ENCODE measurements at regions of chr13 and their contacts with region 1.

Region 1: DNA sequence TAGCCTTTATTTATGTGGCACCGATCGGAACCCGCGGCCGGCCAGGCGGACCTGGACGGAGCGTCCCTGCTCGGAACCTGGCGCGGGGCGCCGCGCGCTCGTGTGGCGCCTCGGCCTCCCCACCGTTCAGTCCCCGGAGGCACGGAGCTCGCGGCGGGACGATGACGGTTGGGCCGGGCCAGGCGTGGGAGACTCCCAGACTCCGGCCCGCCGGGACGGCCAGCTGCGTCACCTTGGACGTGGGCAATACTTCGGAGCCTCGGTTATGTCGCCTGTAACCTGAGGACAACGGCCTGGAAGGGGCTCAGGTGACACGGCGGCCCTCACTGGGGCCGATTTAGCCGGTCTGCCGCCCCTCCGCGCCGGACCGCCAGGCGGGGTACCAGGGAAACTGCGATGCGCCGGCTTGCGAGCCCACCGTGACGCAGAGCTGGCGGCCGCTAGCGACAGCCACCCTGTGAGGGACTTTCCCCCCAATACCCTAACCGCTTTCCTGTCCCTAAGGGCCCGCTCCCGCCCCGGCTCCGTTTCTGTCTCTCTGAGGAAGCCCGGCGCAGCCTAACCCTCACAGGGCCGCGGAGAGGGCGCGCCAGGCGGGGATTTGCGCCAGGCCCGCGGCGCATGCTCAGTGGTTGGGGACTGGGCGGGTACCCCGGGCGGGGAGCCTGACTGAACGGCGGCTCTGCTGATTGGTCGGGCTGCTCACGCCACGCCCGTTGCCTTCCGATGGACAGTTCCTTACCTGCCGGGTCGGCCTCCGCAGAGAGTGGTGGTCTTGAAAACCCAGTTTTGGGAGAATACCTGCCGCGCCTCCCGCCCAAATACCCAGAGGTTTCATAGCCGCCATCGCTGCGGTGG is 109.5 kb upstream of the DOCK9 start:
- DNase-seq: peak; percentile 96
- ATAC-seq: peak; percentile 89
- H3K4me3 Mint-ChIP-seq: peak overlapping the region; percentile 89
- H3K27ac Mint-ChIP-seq: peak overlapping the region; percentile 95
- H3K4me1 Mint-ChIP-seq: peaks cover 31% of the 10 kb centered on the region
- H3K27me3 Mint-ChIP-seq: no peaks in the 10 kb centered on the region

Region 2: GRCh38 chr13:97502181-97502580 is 1585.1 kb before region 1 on chr13:
- CTCF ChIA-PET with region 1: no interaction called
- POLR2A ChIA-PET with region 1: no interaction called
- intact Hi-C with region 1: no loop called
- DNase-seq: no peak
- ATAC-seq: no peak
- H3K4me3 Mint-ChIP-seq: no peak overlapping the region
- H3K27ac Mint-ChIP-seq: no peak overlapping the region
- H3K4me1 Mint-ChIP-seq: no peaks in the 10 kb centered on the region
- H3K27me3 Mint-ChIP-seq: peaks cover 8% of the 10 kb centered on the region

Region 3: GRCh38 chr13:98910501-98910951 is 176.8 kb before region 1 on chr13:
- CTCF ChIA-PET with region 1: no interaction called
- POLR2A ChIA-PET with region 1: no interaction called
- intact Hi-C with region 1: loop called in 1 of 2 experiments (anchors 2 kb)
- DNase-seq: peak; percentile 56
- ATAC-seq: peak; percentile 89
- H3K4me3 Mint-ChIP-seq: peak overlapping the region; percentile 2
- H3K27ac Mint-ChIP-seq: peak overlapping the region; percentile 90
- H3K4me1 Mint-ChIP-seq: peaks cover 51% of the 10 kb centered on the region
- H3K27me3 Mint-ChIP-seq: no peaks in the 10 kb centered on the region

Region 4: GRCh38 chr13:99046851-99047250 is 40.5 kb before region 1 on chr13:
- CTCF ChIA-PET with region 1: interaction called, 8 read pairs
- POLR2A ChIA-PET with region 1: interaction called, 5 read pairs
- intact Hi-C with region 1: loop called (anchors 1 to 2 kb)
- DNase-seq: no peak
- ATAC-seq: no peak
- H3K4me3 Mint-ChIP-seq: peak overlapping the region; percentile 64
- H3K27ac Mint-ChIP-seq: peak overlapping the region; percentile 93
- H3K4me1 Mint-ChIP-seq: peaks cover 87% of the 10 kb centered on the region
- H3K27me3 Mint-ChIP-seq: no peaks in the 10 kb centered on the region

Region 5: GRCh38 chr13:99075268-99076191 is 11.8 kb before region 1 on chr13:
- CTCF ChIA-PET with region 1: interaction called, 4 read pairs
- POLR2A ChIA-PET with region 1: no interaction called
- intact Hi-C with region 1: loop called in 1 of 2 experiments (anchors 1 kb)
- DNase-seq: no peak
- ATAC-seq: peak; percentile 87
- H3K4me3 Mint-ChIP-seq: peak overlapping the region; percentile 51
- H3K27ac Mint-ChIP-seq: peak overlapping the region; percentile 93
- H3K4me1 Mint-ChIP-seq: peaks cover 70% of the 10 kb centered on the region
- H3K27me3 Mint-ChIP-seq: no peaks in the 10 kb centered on the region

Region 6: DNA sequence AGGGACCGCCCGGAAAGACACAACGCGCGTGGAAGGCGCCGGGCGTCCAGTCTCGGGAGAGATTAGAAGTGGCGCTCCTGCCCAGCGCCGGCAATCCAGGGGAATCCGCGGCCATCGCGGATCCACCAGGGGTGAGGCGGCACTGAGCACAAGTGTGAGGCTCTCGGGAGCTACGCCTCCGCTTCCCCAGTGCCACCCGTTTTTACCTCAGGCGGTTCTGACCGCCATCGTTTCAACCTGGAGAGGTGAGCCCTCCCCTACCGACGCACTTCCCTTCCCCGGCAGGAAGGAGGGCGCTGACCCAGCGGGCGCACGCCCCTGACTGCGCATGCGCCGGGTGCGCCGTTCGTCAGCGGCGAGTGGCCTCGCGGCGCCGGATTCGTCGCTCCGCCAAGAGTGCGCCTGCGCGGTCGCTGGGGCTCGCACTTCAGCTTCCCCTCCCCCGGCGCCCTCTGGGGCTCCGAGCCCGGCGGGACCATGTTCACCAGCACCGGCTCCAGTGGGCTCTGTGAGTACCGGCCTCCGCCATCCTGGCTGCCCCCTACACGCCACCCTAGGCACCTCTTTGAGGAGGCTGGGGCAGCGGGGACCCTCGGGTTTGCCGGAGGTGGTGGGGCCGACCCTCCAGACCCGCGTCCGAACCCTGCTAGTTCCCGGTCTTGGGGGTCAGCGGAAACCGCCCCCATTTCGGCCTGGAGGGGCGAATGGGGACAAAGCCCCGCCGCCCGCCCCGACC is 113.3 kb after region 1 on chr13 and contains the start of gene UBAC2:
- CTCF ChIA-PET with region 1: no interaction called
- POLR2A ChIA-PET with region 1: no interaction called
- intact Hi-C with region 1: loop called (anchors 1 kb)
- DNase-seq: peak; percentile 98
- ATAC-seq: peak; percentile 77
- H3K4me3 Mint-ChIP-seq: peak within 1 kb of the TSS; percentile 82
- H3K27ac Mint-ChIP-seq: peak within 1 kb of the TSS; percentile 97
- H3K4me1 Mint-ChIP-seq: peaks cover 62% of the 10 kb centered on the region
- H3K27me3 Mint-ChIP-seq: no peaks in the 10 kb centered on the region
- total RNA-seq, gene UBAC2: 48.4 to 56.3 TPM

Region 7: GRCh38 chr13:99606324-99607066 is 519.2 kb after region 1 on chr13:
- CTCF ChIA-PET with region 1: no interaction called
- POLR2A ChIA-PET with region 1: no interaction called
- intact Hi-C with region 1: loop called in 1 of 2 experiments (anchors 5 kb)
- DNase-seq: peak; percentile 95
- ATAC-seq: peak; percentile 89
- H3K4me3 Mint-ChIP-seq: peak within 1 kb of the TSS; percentile 83
- H3K27ac Mint-ChIP-seq: peak within 1 kb of the TSS; percentile 81
- H3K4me1 Mint-ChIP-seq: peaks cover 42% of the 10 kb centered on the region
- H3K27me3 Mint-ChIP-seq: no peaks in the 10 kb centered on the region

Measured in activated CD4-positive, alpha-beta T cell treated with anti-CD3 and anti-CD28 coated beads for 36 hours (primary cell).